Heart right ventricle (tissue), 16 donors: ENCODE measurements at regions of chr2 and their contacts with region 1.

Region 1: GRCh38 chr2:128321784-128322714 is 3.4 kb upstream of the HS6ST1 start:
- DNase-seq: peak; percentile 85 to 87
- ATAC-seq: peak; percentile 55 to 76 (median 69)
- H3K4me3 ChIP-seq: peak overlapping the region; percentile 25 to 66 (median 59)
- H3K27ac ChIP-seq: peak overlapping the region in 9 of 10 donors; percentile 52 to 90 (median 79)
- H3K4me1 ChIP-seq: peaks cover 1 to 44% (median 28%) of the 10 kb centered on the region in 9 donors
- H3K27me3 ChIP-seq: peaks cover 0 to 8% (median 0%) of the 10 kb centered on the region in 7 donors
- CTCF ChIP-seq: peak; percentile 94 to 99 (median 99)

Region 2: GRCh38 chr2:128187032-128187654 is 134.9 kb before region 1 on chr2:
- intact Hi-C with region 1: loop called in 1 of 10 experiments (anchors 10 kb)
- DNase-seq: no peak
- ATAC-seq: peak in 6 of 8 donors; percentile 48 to 75 (median 60)
- H3K4me3 ChIP-seq: peak overlapping the region in 5 of 10 donors; percentile 2 to 18 (median 13)
- H3K27ac ChIP-seq: peak overlapping the region in 9 of 10 donors; percentile 25 to 77 (median 37)
- H3K4me1 ChIP-seq: peaks cover 0 to 18% (median 5%) of the 10 kb centered on the region in 9 donors
- H3K27me3 ChIP-seq: no peaks in the 10 kb centered on the region
- CTCF ChIP-seq: no peak

Region 3: DNA sequence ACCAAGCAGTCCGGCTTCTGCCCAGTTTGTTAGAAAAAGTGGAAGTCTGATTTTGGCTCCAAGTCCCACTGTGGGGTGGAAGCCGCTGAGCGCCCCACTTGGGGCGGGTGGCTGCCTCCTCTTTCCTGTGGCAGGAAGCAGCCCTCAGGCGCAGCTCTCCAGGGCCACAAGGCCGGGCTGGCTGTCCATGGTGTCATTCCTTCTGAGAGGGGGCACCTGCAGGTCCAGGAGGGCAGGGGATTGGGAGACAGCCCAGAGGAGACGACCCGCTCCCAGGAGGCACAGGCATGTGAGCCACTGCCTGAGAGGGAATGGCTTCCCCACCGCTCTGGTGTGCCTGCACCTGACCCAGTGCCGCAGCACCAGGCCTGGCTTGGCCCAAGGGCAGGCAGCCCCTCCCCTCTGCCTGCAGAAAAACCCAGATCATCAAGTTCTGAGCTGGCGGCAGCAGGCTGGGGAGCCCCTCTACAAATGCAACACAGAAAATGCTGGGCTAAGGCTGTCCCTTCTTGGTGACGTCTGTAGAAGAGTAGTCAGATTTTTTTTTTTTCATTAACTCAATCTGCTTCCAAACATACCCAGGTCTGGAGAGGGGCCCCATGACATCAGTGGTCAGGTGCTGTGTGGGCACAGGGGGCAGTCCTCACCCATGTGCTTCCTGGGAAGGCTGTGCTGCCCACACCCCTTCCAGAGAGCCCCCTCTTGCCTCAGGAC is 41.7 kb before region 1 on chr2:
- intact Hi-C with region 1: no loop called
- DNase-seq: peak in 1 of 2 donors; percentile 36
- ATAC-seq: peak in 5 of 8 donors; percentile 15 to 57 (median 24)
- H3K4me3 ChIP-seq: no peak overlapping the region
- H3K27ac ChIP-seq: peak overlapping the region in 5 of 10 donors; percentile 10 to 58 (median 41)
- H3K4me1 ChIP-seq: peaks cover 21 to 56% (median 39%) of the 10 kb centered on the region in 9 donors
- H3K27me3 ChIP-seq: no peaks in the 10 kb centered on the region
- CTCF ChIP-seq: no peak

Region 4: GRCh38 chr2:128305159-128306087 is 16.6 kb before region 1 on chr2:
- intact Hi-C with region 1: no loop called
- DNase-seq: peak; percentile 53 to 87
- ATAC-seq: peak; percentile 53 to 80 (median 70)
- H3K4me3 ChIP-seq: no peak overlapping the region
- H3K27ac ChIP-seq: peak overlapping the region; percentile 20 to 84 (median 73)
- H3K4me1 ChIP-seq: peaks cover 30 to 66% (median 57%) of the 10 kb centered on the region in 9 donors
- H3K27me3 ChIP-seq: no peaks in the 10 kb centered on the region
- CTCF ChIP-seq: peak in 2 of 9 donors; percentile 19 to 38

Region 5: DNA sequence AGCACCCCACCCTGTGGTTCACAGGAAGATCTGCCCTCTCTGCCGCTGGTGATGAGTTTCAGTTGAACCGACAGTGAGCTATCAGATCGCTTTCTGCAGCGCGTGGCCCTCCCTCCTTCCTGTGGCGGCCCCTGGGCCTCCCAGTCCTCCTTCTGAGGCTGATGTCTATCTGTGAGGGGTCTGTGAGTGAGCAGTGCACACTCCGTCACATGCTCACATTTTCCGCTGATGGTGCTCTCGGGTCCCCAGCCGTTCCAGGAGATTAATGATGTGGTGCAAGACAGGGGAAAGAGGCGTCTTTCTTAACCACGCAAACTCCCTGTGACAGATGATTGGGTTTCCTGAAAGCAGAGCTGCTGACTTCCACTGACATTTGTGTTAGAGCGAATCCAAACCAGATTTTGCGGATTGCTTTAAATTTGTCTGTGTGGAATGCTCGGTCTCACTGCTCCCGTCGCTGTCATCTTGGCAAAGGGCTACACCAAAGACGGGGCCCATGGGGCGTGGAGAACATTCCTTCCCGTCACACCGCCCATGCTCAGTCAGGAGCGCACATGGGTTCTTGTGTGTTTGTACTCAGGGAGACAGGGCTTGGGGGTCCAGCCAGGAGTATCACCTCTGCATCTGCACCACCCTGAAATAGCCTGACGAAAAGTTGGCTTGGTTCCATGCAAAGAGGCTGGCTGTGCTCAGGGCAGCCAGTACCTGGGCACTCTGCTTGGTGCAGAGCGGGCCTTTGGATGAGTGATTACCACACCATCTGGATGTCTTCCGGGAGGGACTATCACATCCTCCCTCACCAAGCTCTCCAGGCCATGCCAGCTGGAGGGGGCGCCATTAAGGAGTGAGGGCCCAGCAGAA is 151.4 kb after region 1 on chr2:
- intact Hi-C with region 1: loop called in 1 of 10 experiments (anchors 10 kb)
- DNase-seq: no peak
- ATAC-seq: peak; percentile 44 to 82 (median 68)
- H3K4me3 ChIP-seq: peak overlapping the region in 7 of 10 donors; percentile 6 to 34 (median 31)
- H3K27ac ChIP-seq: peak overlapping the region in 1 of 10 donors; percentile 13
- H3K4me1 ChIP-seq: peaks cover 0 to 20% (median 14%) of the 10 kb centered on the region in 9 donors
- H3K27me3 ChIP-seq: peaks cover 0 to 10% (median 0%) of the 10 kb centered on the region in 7 donors
- CTCF ChIP-seq: no peak

Region 6: DNA sequence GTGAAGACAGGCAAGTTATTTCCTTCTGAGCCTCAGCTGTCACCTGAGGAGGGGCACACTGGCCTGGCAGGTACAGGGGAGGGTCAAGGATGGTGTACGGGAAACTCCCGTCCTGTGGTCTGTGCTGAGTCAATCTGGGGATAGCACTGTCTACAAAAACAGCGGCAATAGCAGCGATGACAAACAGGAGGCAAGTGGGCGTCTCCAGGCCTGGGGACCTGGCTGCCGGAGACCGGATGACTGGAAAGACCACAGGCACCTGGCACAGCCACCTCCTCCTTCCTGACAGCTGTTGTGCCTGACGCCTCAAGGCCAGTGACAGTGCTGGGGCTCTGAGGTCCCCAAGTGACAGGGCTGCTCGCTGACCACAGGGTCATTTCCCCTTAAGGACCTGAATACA is 198.7 kb after region 1 on chr2:
- intact Hi-C with region 1: loop called in 3 of 10 experiments (anchors 10 kb)
- DNase-seq: no peak
- ATAC-seq: peak in 2 of 8 donors; percentile 23 to 28
- H3K4me3 ChIP-seq: no peak overlapping the region
- H3K27ac ChIP-seq: no peak overlapping the region
- H3K4me1 ChIP-seq: peaks cover 0 to 11% (median 0%) of the 10 kb centered on the region in 9 donors
- H3K27me3 ChIP-seq: no peaks in the 10 kb centered on the region
- CTCF ChIP-seq: no peak

Region 7: GRCh38 chr2:128557831-128558241 is 235.8 kb after region 1 on chr2:
- intact Hi-C with region 1: loop called in 1 of 10 experiments (anchors 10 kb)
- DNase-seq: no peak
- ATAC-seq: peak in 2 of 8 donors; percentile 36 to 65
- H3K4me3 ChIP-seq: no peak overlapping the region
- H3K27ac ChIP-seq: peak overlapping the region in 1 of 10 donors; percentile 64
- H3K4me1 ChIP-seq: peaks cover 0 to 8% (median 2%) of the 10 kb centered on the region in 9 donors
- H3K27me3 ChIP-seq: no peaks in the 10 kb centered on the region
- CTCF ChIP-seq: no peak

Region 8: GRCh38 chr2:128754246-128754724 is 432.2 kb after region 1 on chr2:
- intact Hi-C with region 1: loop called in 1 of 10 experiments (anchors 10 kb)
- DNase-seq: peak; percentile 48 to 59
- ATAC-seq: peak; percentile 83 to 91 (median 85)
- H3K4me3 ChIP-seq: no peak overlapping the region
- H3K27ac ChIP-seq: peak overlapping the region in 2 of 10 donors; percentile 61 to 68
- H3K4me1 ChIP-seq: peaks cover 7 to 47% (median 32%) of the 10 kb centered on the region in 9 donors
- H3K27me3 ChIP-seq: no peaks in the 10 kb centered on the region
- CTCF ChIP-seq: no peak

Region 9: DNA sequence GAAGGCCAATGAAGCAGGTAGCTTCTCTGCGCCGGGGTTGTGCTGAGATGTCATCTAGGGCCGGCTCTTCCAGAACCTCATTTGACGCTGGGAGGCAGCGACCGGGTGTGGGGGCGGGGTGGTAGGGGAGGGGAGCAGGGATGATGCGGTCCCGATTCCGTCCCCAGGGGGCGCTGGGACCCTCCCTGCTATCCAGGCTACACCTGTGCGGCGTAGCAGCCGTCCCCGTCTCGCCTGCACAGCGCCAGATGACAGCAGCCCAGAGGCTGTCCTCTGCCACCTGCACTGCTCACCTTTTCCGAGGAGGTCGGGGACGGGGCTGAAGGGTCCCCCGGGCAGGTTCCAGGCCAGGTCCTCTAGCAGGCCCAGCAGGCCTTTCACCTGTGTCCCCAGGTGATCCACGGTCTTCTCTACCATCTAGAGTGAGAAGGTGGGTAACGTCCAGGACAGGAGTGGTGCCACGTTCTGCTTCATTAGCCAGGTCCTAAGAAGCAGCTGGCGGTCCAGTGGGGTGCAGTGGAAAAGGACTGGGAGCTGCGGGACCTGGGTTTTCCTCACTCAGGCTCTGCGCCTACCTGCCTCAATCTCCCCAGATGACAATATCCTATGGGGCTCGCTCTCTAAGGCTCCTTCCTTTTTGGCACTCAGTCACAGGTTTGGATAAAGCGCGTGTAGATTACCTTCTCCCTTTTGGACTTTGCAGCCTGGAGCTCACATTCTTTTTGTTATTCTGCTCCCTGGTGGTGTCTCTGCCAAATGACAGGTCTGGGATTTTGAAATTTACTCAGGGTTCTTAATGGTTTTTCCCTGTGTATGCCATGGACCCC is 1601.4 kb after region 1 on chr2:
- intact Hi-C with region 1: loop called in 1 of 10 experiments (anchors 10 kb)
- DNase-seq: no peak
- ATAC-seq: peak; percentile 48 to 73 (median 58)
- H3K4me3 ChIP-seq: no peak overlapping the region
- H3K27ac ChIP-seq: no peak overlapping the region
- H3K4me1 ChIP-seq: peaks cover 0 to 8% (median 6%) of the 10 kb centered on the region in 9 donors
- H3K27me3 ChIP-seq: peaks cover 0 to 46% (median 24%) of the 10 kb centered on the region in 7 donors
- CTCF ChIP-seq: peak in 7 of 9 donors; percentile 46 to 61 (median 51)